HEK293 (cell line): ENCODE measurements at regions of chr11 and their contacts with region 1.

Region 1: GRCh38 chr11:76459299-76459698 is 14.5 kb downstream of the EMSY start:
- H3K4me3 ChIP-seq: no peak overlapping the region
- H3K27ac ChIP-seq: no peak overlapping the region
- H3K4me1 ChIP-seq: 0 out of 2 replicates have a peak, but pooled peaks cover 2% of the 10 kb centered on the region
- CTCF ChIP-seq: no peak

Region 2: DNA sequence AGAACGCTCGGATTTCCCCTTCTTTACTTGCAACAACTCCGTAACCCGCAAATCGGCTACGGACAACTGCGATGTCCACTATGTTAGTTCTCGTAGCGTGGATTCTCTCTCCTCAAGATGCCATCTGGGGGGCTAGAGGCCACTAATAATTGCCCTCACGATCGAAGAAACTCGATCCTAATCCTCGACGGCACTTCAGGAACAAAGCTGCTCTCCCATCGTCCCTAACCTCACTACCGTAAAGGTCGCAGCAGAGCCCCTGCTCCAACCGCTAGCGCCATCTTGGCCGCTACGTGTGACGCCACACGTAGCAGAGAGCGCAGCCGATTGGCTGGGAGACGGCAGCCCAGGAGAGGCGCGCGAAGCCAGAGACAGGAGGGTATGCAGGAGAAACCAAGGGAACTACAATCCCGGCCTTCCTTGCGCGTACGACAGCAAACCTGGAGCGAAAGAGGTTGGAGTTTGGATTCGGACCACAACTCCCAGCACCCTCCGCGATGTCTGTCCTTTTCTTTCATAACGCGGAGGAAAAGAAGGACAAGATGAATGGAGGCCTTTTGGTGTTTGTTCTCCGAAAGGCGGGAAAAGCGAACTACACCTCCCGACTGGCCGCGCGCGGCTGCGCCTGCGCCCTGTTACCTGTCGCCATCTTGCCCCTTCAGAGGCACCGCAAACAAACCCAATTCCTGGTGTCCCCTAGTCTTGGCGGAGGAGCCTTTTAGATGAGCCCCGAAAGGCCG is 14.7 kb before region 1 on chr11 and contains the start of gene EMSY:
- CTCF ChIA-PET with region 1: interaction called, 12 read pairs
- POLR2A ChIA-PET with region 1: interaction called, 11 read pairs
- H3K4me3 ChIP-seq: peak within 1 kb of the TSS; percentile 99
- H3K27ac ChIP-seq: peak within 1 kb of the TSS; percentile 81
- H3K4me1 ChIP-seq: 0 out of 2 replicates have a peak, but pooled peaks cover 4% of the 10 kb centered on the region
- CTCF ChIP-seq: no peak